HepG2 (cell line): ENCODE measurements at regions of chr7 and their contacts with region 1.

Region 1: GRCh38 chr7:1503816-1504775 is at the start of gene INTS1:
- DNase-seq: peak; percentile 84
- ATAC-seq: peak; percentile 87
- H3K4me3 ChIP-seq: peak within 1 kb of the TSS; percentile 91 to 100 (median 97)
- H3K27ac ChIP-seq: peak within 1 kb of the TSS; percentile 55
- H3K4me1 ChIP-seq: peaks cover 40% of the 10 kb centered on the region
- H3K27me3 ChIP-seq: no peaks in the 10 kb centered on the region; a peak in 1 of 5 replicates
- CTCF ChIP-seq: peak; percentile 87
- EP300 ChIP-seq: peak in 1 of 2 experiments; percentile 64; a peak in 2 of 4 replicates
- POLR2A ChIP-seq: peak; percentile 56 to 71; a peak in 3 of 4 replicates
- RAD21 ChIP-seq: peak; percentile 92
- total RNA-seq, gene INTS1: 17.3 and 29.0 TPM in 2 replicates

Region 2: GRCh38 chr7:1520574-1521234 is 16.6 kb after region 1 on chr7:
- CTCF ChIA-PET with region 1: no interaction called
- POLR2A ChIA-PET with region 1: interaction called, 12 read pairs
- in situ Hi-C with region 1: no loop called
- intact Hi-C with region 1: loop called (anchors 2 kb)
- DNase-seq: peak; percentile 96
- ATAC-seq: peak; percentile 77
- H3K4me3 ChIP-seq: peak overlapping the region in 2 of 3 experiments; percentile 30 to 50; a peak in 4 of 6 replicates
- H3K27ac ChIP-seq: peak overlapping the region; percentile 60
- H3K4me1 ChIP-seq: peaks cover 68% of the 10 kb centered on the region
- H3K27me3 ChIP-seq: peaks cover 0 to 15% of the 10 kb centered on the region in 2 experiments; a peak in 4 of 5 replicates
- CTCF ChIP-seq: peak; percentile 36
- EP300 ChIP-seq: peak; percentile 56 to 76; a peak in 3 of 4 replicates
- POLR2A ChIP-seq: no peak; a peak in 1 of 4 replicates
- RAD21 ChIP-seq: no peak

Region 3: DNA sequence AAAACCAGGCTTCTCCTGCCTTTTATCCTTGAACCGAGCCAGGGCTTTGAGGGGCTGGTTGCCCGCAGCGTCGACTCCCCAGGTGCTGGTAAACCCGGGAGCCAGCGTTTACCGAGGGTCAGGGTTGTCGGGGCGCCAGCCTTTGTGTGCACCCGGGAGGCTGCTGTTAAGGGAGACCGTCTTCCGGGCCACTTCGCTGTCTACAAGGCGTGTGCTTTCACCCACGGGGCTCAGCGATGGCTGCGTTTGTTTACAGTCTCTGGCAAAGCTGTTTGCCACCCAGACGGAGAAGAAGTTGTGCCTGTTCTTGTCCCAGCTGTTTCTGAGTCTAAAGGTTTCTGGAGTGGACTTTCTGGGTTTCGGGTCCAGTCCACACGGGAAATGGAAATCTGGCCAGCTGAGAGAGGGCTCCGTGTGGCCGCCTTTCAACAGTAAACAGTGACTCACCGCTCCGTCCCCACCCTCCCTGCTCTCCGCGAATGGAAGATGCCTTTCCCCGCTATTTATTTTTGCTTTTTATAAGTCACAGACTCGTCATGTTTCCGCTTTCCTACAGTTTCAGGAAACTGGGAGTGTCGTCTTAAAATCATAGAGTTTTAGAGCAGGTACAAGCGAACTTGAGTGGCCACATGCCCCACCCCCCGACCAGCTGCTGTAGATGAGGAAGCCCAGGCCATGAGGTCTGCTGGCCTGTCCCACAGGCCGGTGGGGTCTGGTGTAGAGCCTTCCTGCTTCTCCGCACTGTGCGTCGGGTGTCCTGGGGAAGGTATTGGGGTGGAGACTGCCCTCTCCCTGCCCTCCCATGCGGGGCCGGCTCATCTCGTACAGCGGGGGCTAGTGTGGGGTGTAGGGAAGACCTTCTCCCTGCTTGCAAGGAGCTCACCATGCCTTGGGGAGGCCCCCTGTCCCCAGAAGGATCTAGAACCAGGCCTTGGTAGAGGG is 28.7 kb after region 1 on chr7:
- CTCF ChIA-PET with region 1: interaction called, 4 read pairs
- POLR2A ChIA-PET with region 1: interaction called, 10 read pairs
- in situ Hi-C with region 1: no loop called
- intact Hi-C with region 1: loop called (anchors 1 kb)
- DNase-seq: peak; percentile 77
- ATAC-seq: peak; percentile 45
- H3K4me3 ChIP-seq: peak overlapping the region; percentile 60 to 86 (median 86)
- H3K27ac ChIP-seq: peak overlapping the region; percentile 81
- H3K4me1 ChIP-seq: peaks cover 69% of the 10 kb centered on the region
- H3K27me3 ChIP-seq: peaks cover 0 to 2% of the 10 kb centered on the region in 2 experiments; a peak in 1 of 5 replicates
- CTCF ChIP-seq: no peak
- EP300 ChIP-seq: 0 out of 4 replicates have a peak, but pooled peaks of 1 of the 2 experiments have one; percentile 29
- POLR2A ChIP-seq: peak in 1 of 2 experiments; percentile 25; a peak in 1 of 4 replicates
- RAD21 ChIP-seq: no peak

Region 4: DNA sequence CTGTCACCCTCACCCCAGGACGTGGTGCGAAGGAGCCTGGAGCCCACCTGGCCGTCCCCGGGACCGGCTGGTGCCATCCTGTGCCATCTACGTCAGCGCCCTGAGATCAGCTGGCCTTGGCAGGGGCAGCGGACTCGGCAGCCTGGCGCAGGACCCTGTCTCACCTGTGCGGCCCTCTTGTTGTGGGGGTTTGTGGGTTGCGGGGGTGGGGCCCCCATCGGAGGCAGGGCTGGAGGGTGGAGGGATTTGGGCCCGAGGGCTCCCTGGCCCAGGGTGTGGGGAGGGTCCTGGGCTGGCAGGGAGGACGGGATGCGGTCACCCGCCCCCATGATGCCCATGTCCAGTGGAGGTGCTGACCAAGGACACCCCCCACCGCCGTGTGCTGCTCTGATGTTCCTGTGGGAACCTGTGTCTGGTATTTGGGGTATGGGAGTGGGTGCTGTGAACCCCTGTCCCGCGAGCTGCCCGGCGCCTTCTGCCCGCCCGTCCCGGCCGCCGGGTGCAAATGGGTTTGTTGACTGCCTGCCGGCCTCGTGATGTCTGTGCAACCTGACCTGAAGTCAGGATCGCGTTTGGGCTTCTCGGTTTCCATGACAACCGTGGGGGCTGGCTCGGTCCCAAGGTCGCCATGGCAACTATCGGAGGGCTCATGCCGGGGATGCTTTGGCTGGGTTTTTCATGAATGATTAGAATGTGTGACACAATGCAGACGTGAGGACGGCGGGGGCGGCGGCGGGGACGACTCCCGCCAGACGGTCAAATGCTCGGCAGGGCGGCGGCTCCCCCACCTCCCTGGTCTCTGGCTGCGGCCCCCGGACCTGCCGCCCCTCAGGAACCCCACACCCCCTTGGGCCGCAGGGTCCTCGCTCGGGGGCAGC is 33.7 kb after region 1 on chr7:
- CTCF ChIA-PET with region 1: interaction called, 3 read pairs
- POLR2A ChIA-PET with region 1: interaction called, 10 read pairs
- in situ Hi-C with region 1: no loop called
- intact Hi-C with region 1: loop called (anchors 2 kb)
- DNase-seq: no peak
- ATAC-seq: no peak
- H3K4me3 ChIP-seq: peak overlapping the region; percentile 33 to 68 (median 61); a peak in 4 of 6 replicates
- H3K27ac ChIP-seq: peak overlapping the region; percentile 85
- H3K4me1 ChIP-seq: peaks cover 47% of the 10 kb centered on the region
- H3K27me3 ChIP-seq: no peaks in the 10 kb centered on the region
- CTCF ChIP-seq: 0 out of 2 replicates have a peak, but pooled peaks have one; percentile 1
- EP300 ChIP-seq: no peak; a peak in 1 of 4 replicates
- POLR2A ChIP-seq: peak in 1 of 2 experiments; percentile 35; a peak in 1 of 4 replicates
- RAD21 ChIP-seq: 0 out of 2 replicates have a peak, but pooled peaks have one; percentile 7

Region 5: DNA sequence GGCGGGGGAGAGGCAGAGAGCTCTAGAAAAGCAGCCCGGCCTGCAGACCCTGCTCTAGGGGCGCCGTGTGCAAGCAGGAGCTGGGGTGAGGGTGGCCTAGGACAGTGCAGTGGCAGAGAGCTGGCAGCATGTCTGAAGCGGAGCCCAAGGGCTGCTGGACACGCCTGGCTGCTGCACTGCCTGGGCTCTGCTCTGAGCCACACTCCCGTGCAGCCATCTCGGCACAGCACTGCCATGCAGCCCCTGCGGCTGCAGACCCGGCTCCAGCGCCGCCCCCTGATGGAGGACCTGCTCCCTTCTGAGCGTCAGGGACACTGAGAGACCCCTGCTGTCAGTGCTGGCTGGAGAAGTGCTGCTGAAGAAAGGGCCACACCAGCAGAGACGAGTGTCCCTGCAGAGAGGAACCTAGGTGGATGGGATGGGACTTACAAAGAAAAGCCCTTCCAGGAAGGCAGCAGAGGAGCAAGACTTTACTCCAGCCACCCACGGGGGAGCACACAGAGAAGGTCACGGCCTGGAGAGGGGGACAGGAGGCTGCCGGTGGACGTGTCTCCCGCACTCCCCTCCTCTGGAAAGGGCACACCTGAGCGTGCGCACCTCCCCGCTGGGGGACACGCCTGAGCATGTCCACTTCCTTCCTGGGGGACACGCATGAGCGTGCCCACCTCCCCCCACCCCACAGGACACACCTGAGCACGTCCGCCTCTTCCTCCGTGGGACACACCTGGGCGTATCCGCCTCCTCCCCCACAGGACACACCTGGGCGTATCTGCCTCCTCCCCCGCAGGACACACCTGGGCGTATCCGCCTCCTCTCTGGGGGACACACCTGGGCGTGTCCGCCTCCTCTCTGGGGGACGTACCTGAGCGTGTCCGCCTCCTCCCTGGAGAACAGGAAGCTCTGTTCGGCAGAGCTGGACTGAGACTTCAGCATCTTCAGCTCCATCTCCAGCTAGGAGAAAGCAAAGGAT is 475.8 kb after region 1 on chr7:
- CTCF ChIA-PET with region 1: no interaction called
- POLR2A ChIA-PET with region 1: no interaction called
- in situ Hi-C with region 1: no loop called
- intact Hi-C with region 1: loop called (anchors 5 kb)
- DNase-seq: no peak
- ATAC-seq: peak; percentile 28
- H3K4me3 ChIP-seq: no peak overlapping the region
- H3K27ac ChIP-seq: no peak overlapping the region
- H3K4me1 ChIP-seq: no peaks in the 10 kb centered on the region
- H3K27me3 ChIP-seq: no peaks in the 10 kb centered on the region
- CTCF ChIP-seq: no peak
- EP300 ChIP-seq: no peak
- POLR2A ChIP-seq: no peak
- RAD21 ChIP-seq: no peak